Panc1 (cell line): ENCODE measurements at regions of chr1 and their contacts with region 1.

Region 1: GRCh38 chr1:25990702-25991395 is 7.0 kb downstream of the PAFAH2 start:
- DNase-seq: no peak
- ATAC-seq: no peak
- H3K4me3 ChIP-seq: no peak overlapping the region
- H3K27ac ChIP-seq: no peak overlapping the region
- H3K4me1 ChIP-seq: peaks cover 3% of the 10 kb centered on the region; the same call in 1 of the 2 replicates
- H3K27me3 ChIP-seq: no peaks in the 10 kb centered on the region
- CTCF ChIP-seq: no peak

Region 2: DNA sequence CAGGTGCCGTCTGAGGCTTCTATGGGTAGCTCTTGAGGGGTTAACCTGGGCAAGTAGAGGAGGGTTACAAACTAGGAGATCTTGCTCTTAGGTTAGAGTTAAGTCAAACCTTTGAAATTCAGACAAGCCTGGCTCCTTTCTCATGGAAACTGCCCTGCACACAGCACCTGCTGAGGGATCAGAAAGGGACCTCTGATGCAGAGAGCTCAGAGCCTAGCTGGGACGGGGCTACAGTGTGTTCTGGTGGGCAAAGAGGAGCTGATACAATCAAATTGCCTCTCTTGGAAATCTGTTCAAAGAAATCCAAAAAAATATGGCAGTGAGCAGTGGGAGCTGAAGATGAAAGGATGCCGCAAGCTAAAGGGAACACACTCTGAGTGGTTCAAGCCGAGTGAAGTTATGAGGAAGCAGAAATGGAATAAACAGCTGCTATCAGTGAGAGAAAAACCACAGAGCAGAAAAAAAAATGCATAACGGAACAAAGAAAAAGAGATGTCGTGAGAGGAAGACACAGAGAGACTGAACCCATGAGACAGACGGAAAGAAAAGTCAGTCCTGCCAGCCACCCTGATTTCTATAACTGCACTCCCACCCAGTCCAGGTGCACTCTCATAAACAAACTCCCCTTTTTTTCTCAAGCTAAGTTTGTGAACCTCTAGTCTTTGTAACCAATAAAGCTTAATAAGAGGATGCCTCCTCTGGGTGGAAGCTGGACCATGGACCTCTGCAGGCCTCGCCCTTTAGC is 19.6 kb before region 1 on chr1:
- CTCF ChIA-PET with region 1: no interaction called
- POLR2A ChIA-PET with region 1: interaction called, 13 read pairs
- in situ Hi-C with region 1: no loop called
- intact Hi-C with region 1: no loop called
- DNase-seq: no peak
- ATAC-seq: no peak
- H3K4me3 ChIP-seq: no peak overlapping the region
- H3K27ac ChIP-seq: no peak overlapping the region
- H3K4me1 ChIP-seq: no peaks in the 10 kb centered on the region
- H3K27me3 ChIP-seq: no peaks in the 10 kb centered on the region
- CTCF ChIP-seq: no peak